ENCODE measurements at regions of chr3 and their contacts with region 1.

Region 1: GRCh38 chr3:108477511-108478147 is 32.8 kb downstream of the MYH15 start:
- DNase-seq: peak; percentile 64
- H3K4me3 Mint-ChIP-seq: no peak overlapping the region
- H3K27ac Mint-ChIP-seq: no peak overlapping the region
- H3K4me1 Mint-ChIP-seq: peaks cover 3% of the 10 kb centered on the region
- H3K27me3 Mint-ChIP-seq: peaks cover 6% of the 10 kb centered on the region

Region 2: GRCh38 chr3:107938143-107938542 is 539.5 kb before region 1 on chr3:
- CTCF ChIA-PET with region 1: interaction called, 11 read pairs
- POLR2A ChIA-PET with region 1: no interaction called
- DNase-seq: no peak
- H3K4me3 Mint-ChIP-seq: no peak overlapping the region
- H3K27ac Mint-ChIP-seq: no peak overlapping the region
- H3K4me1 Mint-ChIP-seq: peaks cover 18% of the 10 kb centered on the region
- H3K27me3 Mint-ChIP-seq: peaks cover 15% of the 10 kb centered on the region

Region 3: GRCh38 chr3:108153451-108153981 is 324.1 kb before region 1 on chr3:
- CTCF ChIA-PET with region 1: interaction called, 22 read pairs
- POLR2A ChIA-PET with region 1: interaction called, 4 read pairs
- DNase-seq: peak; percentile 63
- H3K4me3 Mint-ChIP-seq: no peak overlapping the region
- H3K27ac Mint-ChIP-seq: no peak overlapping the region
- H3K4me1 Mint-ChIP-seq: peaks cover 7% of the 10 kb centered on the region
- H3K27me3 Mint-ChIP-seq: no peaks in the 10 kb centered on the region

Region 4: GRCh38 chr3:108437440-108437839 is 40.2 kb before region 1 on chr3:
- CTCF ChIA-PET with region 1: no interaction called
- POLR2A ChIA-PET with region 1: no interaction called
- DNase-seq: no peak
- H3K4me3 Mint-ChIP-seq: no peak overlapping the region
- H3K27ac Mint-ChIP-seq: no peak overlapping the region
- H3K4me1 Mint-ChIP-seq: no peaks in the 10 kb centered on the region
- H3K27me3 Mint-ChIP-seq: no peaks in the 10 kb centered on the region

Region 5: DNA sequence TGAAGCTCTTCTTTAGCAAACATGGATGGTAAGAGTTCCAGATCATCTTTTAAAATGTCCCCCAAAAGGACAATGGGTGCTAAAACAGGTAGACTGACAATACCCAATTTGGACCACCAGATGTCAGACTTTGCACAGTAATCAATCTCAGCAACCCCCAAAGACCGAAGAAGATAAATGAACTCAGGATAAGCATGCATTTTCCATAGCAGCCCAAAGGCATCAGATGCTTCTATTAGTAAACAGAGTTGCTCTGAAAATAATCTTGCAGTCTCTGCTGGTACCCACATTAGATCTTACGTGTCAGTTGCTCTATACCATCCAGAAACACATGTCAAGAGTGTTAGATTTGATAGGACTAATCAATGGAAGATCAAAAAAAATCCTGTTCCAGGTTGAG is 12.1 kb after region 1 on chr3:
- CTCF ChIA-PET with region 1: interaction called, 38 read pairs
- POLR2A ChIA-PET with region 1: no interaction called
- DNase-seq: peak; percentile 29
- H3K4me3 Mint-ChIP-seq: no peak overlapping the region
- H3K27ac Mint-ChIP-seq: no peak overlapping the region
- H3K4me1 Mint-ChIP-seq: peaks cover 4% of the 10 kb centered on the region
- H3K27me3 Mint-ChIP-seq: no peaks in the 10 kb centered on the region

Measured in activated CD4-positive, alpha-beta memory T cell treated with anti-CD3 and anti-CD28 coated beads, Interleukin-2, amount 10 ng/mL, durations not matched to agents 7 days and 5 days (primary cell).